ENCODE measurements at regions of chr12 and their contacts with region 1.

Region 1: DNA sequence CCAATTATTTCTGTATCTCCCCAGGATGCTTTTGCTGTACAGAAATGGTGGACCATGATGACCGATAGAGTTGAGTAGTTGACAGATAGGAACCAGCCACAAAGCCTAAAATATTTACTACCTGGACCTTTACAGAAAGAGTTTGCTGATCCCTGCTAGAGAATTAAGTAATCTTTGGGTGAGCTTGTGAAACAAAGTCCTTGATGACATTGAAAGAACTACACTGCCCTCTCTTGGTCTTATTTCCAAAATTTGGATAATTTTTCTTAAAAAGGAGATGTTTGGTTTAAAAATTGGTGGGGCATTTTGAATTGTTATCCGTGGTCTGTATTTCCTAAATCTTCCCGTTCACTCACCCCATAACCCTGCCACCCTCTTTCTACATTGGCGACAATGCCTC is 13.7 kb upstream of the TCTN1 start:
- DNase-seq: no peak
- H3K4me3 ChIP-seq: no peak overlapping the region
- H3K27ac ChIP-seq: no peak overlapping the region
- H3K27me3 ChIP-seq: no peaks in the 10 kb centered on the region
- CTCF ChIP-seq: peak; percentile 49

Region 2: GRCh38 chr12:110449799-110450497 is 150.3 kb before region 1 on chr12 and contains the start of gene ARPC3:
- CTCF ChIA-PET with region 1: interaction called, 125 read pairs
- POLR2A ChIA-PET with region 1: interaction called, 8 read pairs
- DNase-seq: peak; percentile 86
- H3K4me3 ChIP-seq: peak within 1 kb of the TSS; percentile 94
- H3K27ac ChIP-seq: peak within 1 kb of the TSS; percentile 91
- H3K27me3 ChIP-seq: no peaks in the 10 kb centered on the region
- CTCF ChIP-seq: peak; percentile 88
- polyA plus RNA-seq, gene ARPC3: 57.0 and 82.3 TPM in 2 replicates

Region 3: DNA sequence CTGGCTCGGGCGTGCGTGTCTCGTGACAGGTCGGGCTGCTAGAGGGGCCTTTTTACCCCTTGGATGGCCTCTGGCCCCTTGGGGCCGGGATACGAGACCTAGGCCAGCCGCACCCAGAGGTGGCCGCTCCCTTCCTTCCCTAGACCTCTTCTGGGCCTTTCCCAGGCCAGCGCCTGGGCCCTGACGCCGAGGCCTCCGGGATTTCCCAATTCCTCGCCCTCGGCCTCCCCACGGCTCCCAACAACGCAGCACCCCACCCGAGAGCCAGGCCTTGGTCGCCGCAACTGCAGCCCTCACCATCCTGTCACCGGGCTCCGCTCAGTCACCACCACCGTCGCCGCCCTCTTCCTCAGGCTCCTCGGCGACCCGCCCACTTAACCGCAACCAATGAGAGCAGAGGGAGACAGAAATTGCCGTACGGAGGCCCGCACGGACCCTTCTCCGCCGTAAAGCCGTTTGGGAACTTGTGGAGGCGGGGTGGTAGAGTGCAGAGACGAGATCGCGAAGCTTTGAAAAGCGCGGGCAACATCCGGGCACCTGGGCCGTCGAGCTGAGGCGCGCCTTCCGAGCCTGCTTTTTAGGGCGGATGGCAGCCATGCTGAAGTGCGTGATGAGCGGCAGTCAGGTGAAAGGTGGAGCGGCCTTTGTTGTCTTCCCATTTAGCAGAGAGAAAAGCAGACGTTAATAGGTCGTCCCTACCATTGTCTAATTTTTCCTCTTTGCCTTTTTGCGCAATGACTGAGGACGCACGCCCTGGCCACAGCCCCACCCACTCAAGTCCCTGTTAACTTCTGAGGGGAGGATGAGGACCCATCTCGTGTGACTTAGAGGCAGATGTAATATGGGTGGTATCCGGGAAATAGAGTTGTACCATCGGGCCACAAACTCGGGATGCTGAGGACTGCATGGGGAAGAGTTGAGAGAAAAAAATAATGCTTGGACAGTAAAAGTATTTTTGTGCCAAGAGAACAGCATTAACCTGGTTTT is 98.2 kb before region 1 on chr12 and contains the starts of genes RAD9B and VPS29:
- CTCF ChIA-PET with region 1: interaction called, 369 read pairs
- POLR2A ChIA-PET with region 1: no interaction called
- DNase-seq: peak; percentile 95
- H3K4me3 ChIP-seq: peak within 1 kb of the TSS; percentile 92
- H3K27ac ChIP-seq: peak within 1 kb of the TSS; percentile 77
- H3K27me3 ChIP-seq: no peaks in the 10 kb centered on the region
- CTCF ChIP-seq: no peak
- polyA plus RNA-seq, gene RAD9B: 0.07 and 0.26 TPM in 2 replicates
- polyA plus RNA-seq, gene VPS29: 135 and 170 TPM in 2 replicates

Region 4: GRCh38 chr12:110555577-110556406 is 44.5 kb before region 1 on chr12:
- CTCF ChIA-PET with region 1: interaction called, 48 read pairs
- POLR2A ChIA-PET with region 1: no interaction called
- DNase-seq: no peak
- H3K4me3 ChIP-seq: peak overlapping the region; percentile 34
- H3K27ac ChIP-seq: no peak overlapping the region
- H3K27me3 ChIP-seq: no peaks in the 10 kb centered on the region
- CTCF ChIP-seq: no peak

Region 5: GRCh38 chr12:110585203-110585821 is 14.9 kb before region 1 on chr12:
- CTCF ChIA-PET with region 1: interaction called, 35 read pairs
- POLR2A ChIA-PET with region 1: no interaction called
- DNase-seq: no peak
- H3K4me3 ChIP-seq: no peak overlapping the region
- H3K27ac ChIP-seq: no peak overlapping the region
- H3K27me3 ChIP-seq: no peaks in the 10 kb centered on the region
- CTCF ChIP-seq: no peak

Region 6: DNA sequence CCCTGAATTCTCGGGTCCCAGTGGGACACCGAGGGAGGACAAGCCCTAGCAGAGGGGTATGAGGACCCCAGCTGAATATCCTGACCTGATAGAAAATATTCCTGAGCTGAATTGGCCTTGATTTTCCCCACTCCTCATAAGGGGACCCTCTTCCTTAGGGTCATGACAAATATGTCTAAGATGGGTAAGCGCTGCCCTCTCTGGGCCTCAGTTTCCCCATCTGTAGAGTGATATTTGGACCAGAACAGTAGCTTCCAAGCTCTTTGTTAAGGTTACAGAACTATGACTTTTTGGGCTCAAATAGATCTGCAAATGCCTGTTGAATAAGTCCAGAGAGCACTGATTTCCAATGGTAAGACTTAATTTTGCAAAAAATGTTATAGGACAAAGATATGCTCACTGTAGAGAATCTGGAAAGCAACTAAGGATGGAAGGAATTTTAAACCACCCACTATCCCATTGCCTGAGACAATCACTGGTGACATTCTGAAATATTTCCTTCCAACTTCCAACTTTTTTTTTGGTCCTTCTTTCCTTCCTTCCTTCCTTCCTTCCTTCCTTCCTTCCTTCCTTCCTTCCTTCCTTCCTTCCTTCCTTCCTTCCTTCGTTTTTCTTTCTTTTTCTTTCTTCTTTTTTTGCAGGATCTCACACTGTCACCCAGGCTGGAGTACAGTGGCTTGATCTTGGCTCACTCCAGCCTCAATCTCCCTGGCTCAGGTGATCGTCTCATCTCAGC is 288.2 kb after region 1 on chr12:
- CTCF ChIA-PET with region 1: interaction called, 10 read pairs
- POLR2A ChIA-PET with region 1: no interaction called
- DNase-seq: no peak
- H3K4me3 ChIP-seq: no peak overlapping the region
- H3K27ac ChIP-seq: no peak overlapping the region
- H3K27me3 ChIP-seq: no peaks in the 10 kb centered on the region
- CTCF ChIP-seq: no peak

Region 7: DNA sequence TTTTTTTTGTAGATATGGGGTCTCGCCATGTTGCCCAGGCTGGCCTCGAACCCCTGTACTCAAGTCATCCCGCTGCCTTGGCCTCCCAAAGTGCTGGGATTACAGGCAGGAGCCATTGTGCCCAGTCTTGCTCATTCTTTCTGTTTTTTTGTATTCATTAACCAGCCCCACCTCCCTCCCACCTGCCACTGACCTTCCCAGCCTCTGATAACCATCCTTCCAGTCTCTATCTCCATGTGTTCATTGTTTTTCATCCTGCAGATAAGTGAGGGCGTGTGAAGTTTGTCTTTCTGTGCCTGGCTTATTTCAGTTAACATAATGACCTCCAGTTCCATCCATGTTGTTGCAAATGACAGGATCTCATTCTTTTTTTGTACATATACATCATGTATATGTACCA is 301.1 kb after region 1 on chr12:
- CTCF ChIA-PET with region 1: no interaction called
- POLR2A ChIA-PET with region 1: no interaction called
- DNase-seq: no peak
- H3K4me3 ChIP-seq: no peak overlapping the region
- H3K27ac ChIP-seq: no peak overlapping the region
- H3K27me3 ChIP-seq: no peaks in the 10 kb centered on the region
- CTCF ChIP-seq: no peak